Left ventricle myocardium superior (tissue), 1 donor: ENCODE measurements at regions of chr2 and their contacts with region 1.

Region 1: DNA sequence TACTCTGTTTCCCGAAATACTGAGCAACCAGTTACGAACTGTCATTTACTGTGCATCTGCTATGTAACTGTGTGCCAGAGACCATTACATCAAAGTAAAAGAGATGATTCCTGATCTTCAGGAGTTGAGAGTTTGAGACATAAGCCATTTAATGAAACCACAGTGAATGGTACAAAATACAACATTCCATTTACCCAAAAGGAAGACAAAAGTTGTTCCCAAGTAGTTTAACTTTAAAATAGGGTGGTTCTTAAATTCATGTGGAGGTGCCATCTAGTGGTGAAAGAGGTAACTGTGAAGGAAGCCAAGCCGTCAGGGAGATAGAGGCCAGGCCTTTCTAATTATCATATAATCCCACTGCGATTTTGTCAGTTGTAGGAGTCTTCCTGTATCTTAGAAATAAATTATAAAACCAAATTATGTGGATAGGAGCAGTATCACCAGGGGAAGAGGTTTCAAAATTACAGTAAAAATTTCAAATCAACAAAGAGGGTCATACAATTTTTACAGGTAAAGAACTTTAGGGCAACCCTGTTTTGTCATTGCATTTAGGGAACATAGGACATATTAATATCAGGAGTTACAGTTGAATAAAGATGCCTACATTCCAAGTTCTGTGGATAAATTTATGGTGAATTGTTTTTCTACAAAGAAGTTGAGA is 67.7 kb downstream of the EPAS1 start:
- DNase-seq: no peak
- ATAC-seq: peak; percentile 66

Region 2: GRCh38 chr2:46010925-46011490 is 353.9 kb before region 1 on chr2:
- intact Hi-C with region 1: loop called (anchors 10 kb)
- DNase-seq: no peak
- ATAC-seq: peak; percentile 55

Region 3: GRCh38 chr2:46073540-46074018 is 291.3 kb before region 1 on chr2:
- intact Hi-C with region 1: loop called (anchors 10 kb)
- DNase-seq: no peak
- ATAC-seq: peak; percentile 52